Upper lobe of right lung (tissue), 1 donor: ENCODE measurements at regions of chr12 and their contacts with region 1.

Region 1: DNA sequence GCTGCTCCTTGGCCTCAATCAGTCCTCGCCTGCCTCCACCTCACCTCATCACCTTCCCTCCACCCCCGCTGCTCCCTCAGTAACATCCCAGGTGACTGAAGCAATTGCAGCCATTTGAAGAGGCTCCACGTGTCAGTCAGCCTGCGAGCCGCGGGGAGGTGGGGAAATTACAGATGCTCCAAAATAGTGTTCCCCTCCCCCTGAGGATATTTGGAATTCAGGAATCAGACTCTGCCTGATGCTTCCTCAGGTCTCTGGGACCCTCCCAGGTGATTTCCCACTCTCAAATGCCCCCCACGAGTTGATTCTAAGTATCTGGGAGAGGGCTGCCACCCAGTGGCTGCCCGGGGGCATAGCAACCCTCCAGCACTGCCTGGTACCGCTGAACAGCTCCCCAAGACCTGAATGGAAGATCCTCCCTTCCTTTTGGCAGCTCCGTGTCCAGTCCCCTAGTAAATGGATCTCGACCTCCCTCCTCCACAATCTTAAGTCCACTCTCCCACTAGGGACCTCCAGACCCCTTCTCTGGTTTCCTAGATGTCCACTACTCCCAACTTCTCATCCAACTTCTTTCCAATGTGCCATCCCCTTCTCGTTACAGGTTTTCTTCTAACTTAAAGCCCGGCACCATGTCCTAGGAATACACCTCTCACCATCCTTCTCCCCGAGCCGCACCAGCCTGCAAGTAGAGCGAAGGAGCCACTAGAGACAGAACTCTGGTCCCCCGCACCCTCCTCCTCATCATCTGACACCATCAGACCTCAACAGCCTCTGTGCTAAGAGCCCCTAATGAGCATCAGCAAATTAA is 1.4 kb upstream of the ASIC1 start:
- DNase-seq: no peak
- ATAC-seq: peak; percentile 70
- H3K4me3 ChIP-seq: no peak overlapping the region
- H3K27ac ChIP-seq: no peak overlapping the region
- H3K4me1 ChIP-seq: peaks cover 7% of the 10 kb centered on the region
- H3K27me3 ChIP-seq: peaks cover 18% of the 10 kb centered on the region
- CTCF ChIP-seq: peak; percentile 95

Region 2: DNA sequence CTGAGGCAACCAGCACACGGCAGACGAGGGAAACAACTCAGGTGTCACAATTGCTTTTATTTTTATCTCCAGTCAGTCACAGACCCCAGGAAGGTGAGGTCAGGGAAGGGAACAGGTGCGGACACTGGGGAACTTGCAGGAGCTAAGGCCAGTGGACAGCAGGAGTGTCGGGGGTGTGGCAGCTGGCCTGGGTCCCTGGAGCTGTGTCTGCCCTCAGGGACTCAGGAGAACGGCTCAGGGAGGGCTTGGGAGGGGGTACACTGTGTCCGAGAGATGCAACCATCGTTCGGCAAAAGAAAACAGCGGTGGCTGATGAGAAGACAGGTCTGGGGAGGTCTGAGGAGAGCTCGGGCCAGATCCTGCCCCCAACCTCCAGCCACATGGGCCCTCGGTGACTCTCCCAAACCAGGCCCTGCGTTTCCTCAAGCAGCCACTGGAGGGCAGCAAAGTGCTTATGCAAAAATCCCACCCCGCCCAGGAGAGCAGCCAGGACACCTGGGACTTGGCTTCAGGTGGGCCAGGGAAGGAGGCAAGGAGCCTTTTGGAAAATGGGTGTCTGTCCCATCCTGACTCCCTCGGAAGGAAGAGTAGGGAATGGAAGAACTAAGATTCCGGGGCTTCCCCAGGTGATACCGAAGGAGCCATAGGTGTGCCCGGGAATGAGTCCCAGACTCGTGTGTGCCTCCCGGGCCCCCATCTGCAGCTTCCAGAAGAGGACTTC is 189.0 kb before region 1 on chr12:
- intact Hi-C with region 1: loop called (anchors 10 kb)
- DNase-seq: peak; percentile 86
- ATAC-seq: peak; percentile 81
- H3K4me3 ChIP-seq: no peak overlapping the region
- H3K27ac ChIP-seq: peak overlapping the region; percentile 59
- H3K4me1 ChIP-seq: peaks cover 24% of the 10 kb centered on the region
- H3K27me3 ChIP-seq: no peaks in the 10 kb centered on the region
- CTCF ChIP-seq: peak; percentile 98

Region 3: GRCh38 chr12:49967042-49967776 is 88.8 kb before region 1 on chr12:
- intact Hi-C with region 1: loop called (anchors 5 kb)
- DNase-seq: peak; percentile 96
- ATAC-seq: peak; percentile 89
- H3K4me3 ChIP-seq: peak overlapping the region; percentile 34
- H3K27ac ChIP-seq: no peak overlapping the region
- H3K4me1 ChIP-seq: peaks cover 8% of the 10 kb centered on the region
- H3K27me3 ChIP-seq: no peaks in the 10 kb centered on the region
- CTCF ChIP-seq: peak; percentile 75

Region 4: GRCh38 chr12:49982246-49983087 is 73.6 kb before region 1 on chr12:
- intact Hi-C with region 1: no loop called
- DNase-seq: no peak
- ATAC-seq: no peak
- H3K4me3 ChIP-seq: no peak overlapping the region
- H3K27ac ChIP-seq: no peak overlapping the region
- H3K4me1 ChIP-seq: peaks cover 11% of the 10 kb centered on the region
- H3K27me3 ChIP-seq: no peaks in the 10 kb centered on the region
- CTCF ChIP-seq: no peak

Region 5: GRCh38 chr12:50201978-50202521 is 146.0 kb after region 1 on chr12:
- intact Hi-C with region 1: no loop called
- DNase-seq: no peak
- ATAC-seq: peak; percentile 76
- H3K4me3 ChIP-seq: no peak overlapping the region
- H3K27ac ChIP-seq: no peak overlapping the region
- H3K4me1 ChIP-seq: peaks cover 3% of the 10 kb centered on the region
- H3K27me3 ChIP-seq: no peaks in the 10 kb centered on the region
- CTCF ChIP-seq: no peak

Region 6: DNA sequence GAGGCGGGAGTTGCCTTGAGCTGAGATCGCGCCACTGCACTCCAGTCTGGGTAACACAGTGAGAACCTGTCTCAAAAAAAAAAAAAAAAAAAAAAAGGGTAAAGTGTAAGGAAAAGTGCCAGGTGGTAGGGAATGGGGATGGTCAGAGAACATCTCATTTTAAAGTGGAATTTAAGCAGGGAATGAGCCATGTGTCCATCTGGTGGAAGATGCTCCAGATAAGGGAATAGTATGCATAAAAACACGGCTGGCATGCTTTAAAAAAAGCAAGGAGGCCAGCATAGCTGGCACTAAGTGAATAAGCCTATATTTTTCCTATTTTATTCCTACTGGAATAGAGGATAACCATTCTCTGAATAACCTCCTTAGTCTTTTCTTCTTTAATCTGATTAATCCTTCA is 306.6 kb after region 1 on chr12:
- intact Hi-C with region 1: no loop called
- DNase-seq: no peak
- ATAC-seq: no peak
- H3K4me3 ChIP-seq: no peak overlapping the region
- H3K27ac ChIP-seq: no peak overlapping the region
- H3K4me1 ChIP-seq: no peaks in the 10 kb centered on the region
- H3K27me3 ChIP-seq: no peaks in the 10 kb centered on the region
- CTCF ChIP-seq: no peak